Activated CD4-positive, alpha-beta memory T cell treated with anti-CD3 and anti-CD28 coated beads for 36 hours (primary cell): ENCODE measurements at regions of chr2 and their contacts with region 1.

Region 1: DNA sequence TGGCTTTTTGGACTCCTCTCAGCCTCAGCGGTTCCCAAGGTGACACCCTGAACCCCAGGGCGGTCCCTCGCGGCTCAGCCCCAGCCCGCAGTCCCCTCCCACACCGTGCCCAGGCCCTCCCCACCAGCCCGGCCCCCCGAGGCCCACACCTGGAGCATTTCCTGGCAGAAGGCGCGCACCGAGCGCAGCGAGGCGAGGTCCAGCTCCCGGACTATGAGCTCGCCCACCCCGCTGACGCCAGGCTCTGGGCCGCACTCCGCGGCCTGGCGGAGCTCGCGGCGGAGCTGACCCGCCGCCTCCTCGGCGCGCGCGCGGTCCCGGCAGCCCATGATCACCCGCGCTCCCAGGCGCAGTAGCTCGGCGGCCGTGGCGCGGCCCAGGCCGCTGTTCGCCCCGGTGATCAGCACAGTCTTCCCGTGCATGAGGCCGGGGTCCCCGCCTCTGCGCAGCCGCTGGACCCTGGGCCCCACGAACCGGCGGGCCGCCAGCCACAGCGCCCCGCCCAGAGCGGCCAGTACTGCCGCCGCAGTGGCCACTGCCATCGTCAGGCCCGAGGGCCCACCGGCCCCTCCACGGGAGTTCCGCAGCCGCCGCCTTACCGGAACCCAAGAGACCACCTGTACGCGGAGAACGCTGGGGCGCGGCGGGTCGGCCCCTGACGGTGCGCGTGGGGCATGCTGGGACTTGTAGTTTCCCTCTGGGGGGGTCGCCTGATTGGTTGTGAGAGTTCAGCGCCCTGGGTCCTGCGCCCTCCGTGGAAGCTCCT is at the start of gene RDH14:
- DNase-seq: peak; percentile 94
- H3K4me3 Mint-ChIP-seq: peak within 1 kb of the TSS; percentile 90
- H3K27ac Mint-ChIP-seq: peak within 1 kb of the TSS; percentile 89
- H3K4me1 Mint-ChIP-seq: peaks cover 33% of the 10 kb centered on the region
- H3K27me3 Mint-ChIP-seq: no peaks in the 10 kb centered on the region
- total RNA-seq, gene RDH14: 14.1 to 14.4 TPM

Region 2: DNA sequence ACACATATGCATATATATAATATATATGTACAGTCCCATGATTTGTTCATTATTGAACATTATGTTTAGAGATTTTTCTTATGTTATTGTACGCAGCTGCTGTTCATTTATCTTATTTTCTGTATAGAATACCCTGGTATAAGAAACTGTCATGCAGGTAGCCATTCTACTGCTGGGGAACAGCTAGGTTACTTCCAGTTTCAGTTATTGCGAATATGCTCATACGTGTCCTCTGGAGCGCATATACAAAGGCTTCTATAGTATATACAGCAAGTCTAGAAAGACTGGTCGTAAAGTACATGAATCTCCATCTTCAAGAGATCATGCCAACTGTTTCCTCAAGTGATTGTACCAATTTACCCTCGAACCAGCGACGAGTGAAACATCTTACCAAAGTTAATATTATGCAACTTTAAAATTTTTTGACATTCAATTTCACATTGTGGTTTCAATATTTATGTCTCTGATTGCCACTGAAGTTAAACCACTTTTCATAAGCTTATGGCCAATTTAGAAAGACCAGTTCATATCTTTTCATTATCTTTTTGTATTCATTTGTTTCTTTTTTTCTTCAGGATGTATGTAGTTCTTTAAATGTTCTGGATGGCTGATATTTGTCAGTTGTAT is 53.2 kb before region 1 on chr2:
- CTCF ChIA-PET with region 1: no interaction called
- POLR2A ChIA-PET with region 1: no interaction called
- intact Hi-C with region 1: no loop called
- DNase-seq: no peak
- H3K4me3 Mint-ChIP-seq: no peak overlapping the region
- H3K27ac Mint-ChIP-seq: no peak overlapping the region
- H3K4me1 Mint-ChIP-seq: no peaks in the 10 kb centered on the region
- H3K27me3 Mint-ChIP-seq: peaks cover 11% of the 10 kb centered on the region

Region 3: DNA sequence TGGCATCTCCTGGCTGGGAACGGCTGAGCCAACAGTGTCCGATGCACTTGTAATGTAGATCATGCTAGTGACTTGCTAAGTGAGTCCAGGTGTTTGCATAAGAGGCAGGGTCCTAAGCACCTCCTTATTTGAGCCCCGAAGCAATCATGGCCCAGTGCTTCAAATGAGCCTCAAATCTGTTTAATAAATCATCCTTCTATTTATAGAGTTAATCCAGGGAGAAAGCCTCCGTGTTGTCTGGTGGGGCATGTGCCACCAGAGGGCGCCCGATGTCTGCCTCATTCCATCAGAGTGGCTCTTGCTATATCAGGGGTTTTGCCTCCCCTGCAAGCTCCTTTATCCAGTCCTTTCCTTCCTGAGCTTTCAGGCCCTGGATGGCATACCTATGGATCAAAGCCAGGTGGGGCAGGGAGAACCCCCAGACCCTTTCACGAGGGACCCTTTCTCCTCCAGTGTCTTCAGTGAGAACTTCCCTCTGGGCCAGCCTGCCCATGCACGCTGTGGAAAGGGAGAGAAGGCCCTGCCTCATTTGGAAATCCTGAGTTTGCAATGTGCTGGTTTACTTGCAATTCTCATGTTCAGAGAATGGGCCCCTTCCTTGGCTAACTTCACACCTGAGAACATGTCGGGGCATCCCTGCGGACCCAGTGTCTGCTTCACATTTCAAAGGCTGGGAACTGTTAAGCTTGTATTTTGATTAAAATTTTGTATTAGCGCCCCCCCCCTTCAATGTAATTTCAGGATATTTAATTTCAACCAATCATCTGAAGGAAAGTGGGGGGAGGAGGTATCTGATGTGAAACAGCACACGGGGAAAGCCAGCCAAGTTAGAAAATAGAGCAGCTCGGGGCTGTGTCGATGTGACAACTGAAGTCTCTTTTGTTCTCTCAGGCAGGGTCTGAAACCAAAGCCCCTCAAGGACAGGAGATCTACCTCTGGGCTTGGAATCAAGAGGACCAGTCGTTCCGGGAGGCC is 39.5 kb before region 1 on chr2:
- CTCF ChIA-PET with region 1: no interaction called
- POLR2A ChIA-PET with region 1: no interaction called
- intact Hi-C with region 1: no loop called
- DNase-seq: peak; percentile 77
- H3K4me3 Mint-ChIP-seq: no peak overlapping the region
- H3K27ac Mint-ChIP-seq: no peak overlapping the region
- H3K4me1 Mint-ChIP-seq: no peaks in the 10 kb centered on the region
- H3K27me3 Mint-ChIP-seq: peaks cover 21% of the 10 kb centered on the region

Region 4: DNA sequence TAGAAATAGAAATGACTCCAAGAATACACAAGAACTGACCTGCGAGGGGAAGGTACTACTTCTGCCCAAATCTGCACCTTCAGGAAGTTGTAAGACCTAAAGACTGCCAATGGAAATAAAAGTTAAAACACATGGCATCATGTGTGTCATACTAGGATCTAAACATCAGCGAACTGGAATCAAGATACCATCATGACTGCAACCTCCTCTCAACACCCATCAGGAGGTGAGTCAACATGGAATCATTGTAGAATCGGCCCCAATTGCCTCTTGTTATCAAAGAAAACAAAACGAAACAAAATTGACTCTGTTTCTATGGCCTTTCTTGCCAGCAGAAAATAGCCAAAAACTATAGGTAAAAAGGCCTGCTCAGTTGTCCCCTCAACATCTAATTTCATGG is 14.8 kb before region 1 on chr2:
- CTCF ChIA-PET with region 1: interaction called, 3 read pairs
- POLR2A ChIA-PET with region 1: interaction called, 6 read pairs
- intact Hi-C with region 1: loop called (anchors 2 kb)
- DNase-seq: peak; percentile 15
- H3K4me3 Mint-ChIP-seq: no peak overlapping the region
- H3K27ac Mint-ChIP-seq: peak overlapping the region; percentile 23
- H3K4me1 Mint-ChIP-seq: peaks cover 40% of the 10 kb centered on the region
- H3K27me3 Mint-ChIP-seq: no peaks in the 10 kb centered on the region

Region 5: GRCh38 chr2:18585526-18585925 is 25.3 kb after region 1 on chr2:
- CTCF ChIA-PET with region 1: no interaction called
- POLR2A ChIA-PET with region 1: no interaction called
- intact Hi-C with region 1: no loop called
- DNase-seq: no peak
- H3K4me3 Mint-ChIP-seq: no peak overlapping the region
- H3K27ac Mint-ChIP-seq: no peak overlapping the region
- H3K4me1 Mint-ChIP-seq: no peaks in the 10 kb centered on the region
- H3K27me3 Mint-ChIP-seq: no peaks in the 10 kb centered on the region

Region 6: DNA sequence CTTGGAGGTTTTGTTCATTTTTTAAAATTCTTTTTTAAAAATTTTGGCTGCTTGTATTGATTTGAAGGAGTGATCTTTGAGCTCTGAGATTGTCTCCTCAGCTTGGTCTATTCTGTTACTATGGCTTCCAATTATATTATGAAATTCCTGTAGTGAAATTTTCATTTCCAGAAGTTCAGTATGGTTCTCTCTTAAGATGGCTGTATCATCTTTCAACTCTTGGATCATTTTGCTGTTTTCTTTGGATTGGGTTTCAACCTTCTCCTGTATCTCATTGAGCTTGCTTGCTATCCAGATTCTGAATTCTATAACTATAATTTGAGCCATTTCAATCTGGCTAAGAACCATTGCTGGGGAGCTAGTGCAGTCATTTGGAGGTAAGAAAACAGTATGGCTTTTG is 300.0 kb after region 1 on chr2:
- CTCF ChIA-PET with region 1: no interaction called
- POLR2A ChIA-PET with region 1: no interaction called
- intact Hi-C with region 1: no loop called
- DNase-seq: no peak
- H3K4me3 Mint-ChIP-seq: no peak overlapping the region
- H3K27ac Mint-ChIP-seq: no peak overlapping the region
- H3K4me1 Mint-ChIP-seq: no peaks in the 10 kb centered on the region
- H3K27me3 Mint-ChIP-seq: no peaks in the 10 kb centered on the region